Activated B cell treated with CpG ODN at 0.5 μM for 24 hours (primary cell): ENCODE measurements at regions of chr11 and their contacts with region 1.

Region 1: DNA sequence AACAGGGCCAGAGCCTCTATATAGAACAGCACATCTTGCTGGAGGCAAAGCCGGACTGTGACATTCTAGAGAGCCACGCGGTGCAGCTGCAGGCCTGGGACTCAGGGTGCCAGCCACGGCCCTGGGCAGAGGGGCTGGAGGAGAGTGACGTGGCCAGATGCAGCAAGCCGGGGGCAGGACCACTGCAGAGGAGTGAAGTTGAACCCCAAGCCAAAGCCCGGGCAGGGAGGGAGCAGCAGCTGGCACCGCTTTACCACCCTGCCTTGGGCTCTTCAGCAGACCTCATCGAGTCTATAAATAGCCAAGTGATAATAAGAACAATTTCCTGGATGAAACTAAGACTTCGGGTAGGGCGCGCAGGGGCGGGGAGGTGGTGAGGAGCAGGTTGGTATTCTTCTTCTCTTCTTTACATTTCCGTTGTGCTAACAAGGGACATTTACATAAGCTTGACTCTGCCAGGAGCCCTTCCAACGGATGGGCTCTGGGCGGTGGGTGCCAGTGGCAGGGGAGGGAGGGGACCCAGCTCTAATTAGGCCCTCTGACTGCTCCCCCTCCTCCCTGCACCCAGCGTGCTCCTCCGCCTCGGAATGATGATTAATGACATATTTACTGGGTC is 110.2 kb downstream of the ST3GAL4 start:
- DNase-seq: no peak
- ATAC-seq: peak; percentile 63
- H3K4me3 Mint-ChIP-seq: peak overlapping the region; percentile 71
- H3K27ac Mint-ChIP-seq: peak overlapping the region; percentile 41
- H3K4me1 Mint-ChIP-seq: peaks cover 40% of the 10 kb centered on the region
- H3K27me3 Mint-ChIP-seq: peaks cover 2% of the 10 kb centered on the region
- CTCF ChIP-seq: no peak

Region 2: DNA sequence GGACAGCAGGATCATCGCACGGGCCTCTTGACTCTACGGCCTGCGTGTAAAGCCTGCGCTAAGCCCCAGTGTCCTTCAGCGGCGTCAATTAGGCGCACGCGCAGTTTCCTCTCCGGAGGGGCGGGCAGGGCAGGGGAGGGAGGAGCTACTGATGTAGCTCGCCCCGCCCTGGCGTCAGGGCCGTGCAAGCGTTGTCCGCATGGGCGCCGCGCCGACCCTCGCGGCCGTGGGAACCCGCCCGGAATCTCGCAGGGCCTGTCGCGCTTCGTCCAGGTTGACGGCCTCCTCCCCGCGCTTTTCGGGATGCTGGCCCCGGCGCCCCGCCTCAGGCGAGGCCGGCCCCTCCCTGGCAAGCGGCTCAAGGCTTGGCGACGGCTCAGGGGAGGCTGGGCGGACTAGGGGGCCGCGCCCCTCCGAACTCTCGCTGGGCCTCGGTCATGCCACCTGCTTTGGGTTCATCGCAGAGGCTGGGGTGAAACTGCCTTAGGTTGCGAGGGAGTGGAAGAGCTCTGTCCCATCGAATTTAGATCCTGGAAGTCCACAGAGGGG is 49.1 kb before region 1 on chr11:
- CTCF ChIA-PET with region 1: no interaction called
- POLR2A ChIA-PET with region 1: no interaction called
- intact Hi-C with region 1: loop called (anchors 2 kb)
- DNase-seq: peak; percentile 55
- ATAC-seq: peak; percentile 99
- H3K4me3 Mint-ChIP-seq: peak overlapping the region; percentile 67
- H3K27ac Mint-ChIP-seq: no peak overlapping the region
- H3K4me1 Mint-ChIP-seq: peaks cover 26% of the 10 kb centered on the region
- H3K27me3 Mint-ChIP-seq: no peaks in the 10 kb centered on the region
- CTCF ChIP-seq: no peak